OCI-LY7 (cell line): ENCODE measurements at regions of chr13 and their contacts with region 1.

Region 1: DNA sequence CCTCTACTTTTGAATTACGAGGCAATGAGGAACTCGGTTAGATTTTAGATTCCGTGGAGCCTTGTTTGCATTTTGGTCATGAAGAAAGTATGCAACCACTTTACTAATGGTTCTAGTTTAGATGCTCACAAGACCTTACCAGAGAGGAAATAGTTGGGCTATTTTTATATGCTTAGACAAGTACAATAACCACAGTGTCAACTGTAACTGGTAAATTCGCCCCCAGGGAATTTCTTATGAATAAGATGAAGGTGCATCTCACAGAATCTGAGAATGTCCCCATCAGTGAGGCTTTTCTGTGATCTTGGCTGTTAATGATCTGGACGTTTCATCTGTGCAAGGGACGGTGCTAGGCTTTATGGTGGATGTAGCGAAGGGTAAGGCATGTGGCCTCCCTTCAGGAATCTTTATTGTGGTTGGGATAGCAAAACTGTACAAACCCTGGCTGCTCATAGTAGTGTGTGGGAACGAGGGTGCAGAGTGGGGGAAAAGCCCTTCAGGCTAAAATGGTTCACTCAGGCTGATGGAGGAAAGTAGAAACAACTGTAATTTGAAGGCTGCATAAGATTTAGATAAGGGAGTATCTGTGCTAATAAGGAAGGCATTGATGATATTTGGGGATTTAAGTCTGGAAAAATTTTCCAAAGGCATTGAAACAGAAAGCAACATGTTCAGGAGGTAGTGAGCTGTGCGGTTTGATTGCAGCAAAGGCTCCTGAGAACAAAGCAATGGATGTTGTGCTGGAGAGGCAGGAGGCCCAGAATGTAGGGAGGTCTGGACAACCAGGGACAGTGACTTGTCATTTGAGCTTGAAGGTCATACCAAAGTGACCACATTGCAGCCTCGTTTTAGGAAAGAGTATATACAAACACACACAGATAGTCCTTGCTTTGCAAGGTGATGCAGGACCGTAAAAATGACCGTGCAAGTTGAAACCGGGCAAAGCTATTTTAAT is 28.4 kb downstream of the UBAC2 start:
- DNase-seq: peak; percentile 95
- H3K4me3 ChIP-seq: peak overlapping the region; percentile 58
- H3K27ac ChIP-seq: peak overlapping the region; percentile 97
- H3K4me1 ChIP-seq: peaks cover 85% of the 10 kb centered on the region
- CTCF ChIP-seq: no peak

Region 2: GRCh38 chr13:99200432-99201167 is 28.4 kb before region 1 on chr13 and contains the start of gene UBAC2:
- CTCF ChIA-PET with region 1: no interaction called
- POLR2A ChIA-PET with region 1: interaction called, 12 read pairs
- intact Hi-C with region 1: loop called (anchors 1 kb)
- DNase-seq: peak; percentile 92
- H3K4me3 ChIP-seq: peak within 1 kb of the TSS; percentile 87
- H3K27ac ChIP-seq: peak within 1 kb of the TSS; percentile 82
- H3K4me1 ChIP-seq: peaks cover 50% of the 10 kb centered on the region
- CTCF ChIP-seq: no peak
- total RNA-seq, gene UBAC2: 26.8 and 33.4 TPM in 2 replicates

Region 3: DNA sequence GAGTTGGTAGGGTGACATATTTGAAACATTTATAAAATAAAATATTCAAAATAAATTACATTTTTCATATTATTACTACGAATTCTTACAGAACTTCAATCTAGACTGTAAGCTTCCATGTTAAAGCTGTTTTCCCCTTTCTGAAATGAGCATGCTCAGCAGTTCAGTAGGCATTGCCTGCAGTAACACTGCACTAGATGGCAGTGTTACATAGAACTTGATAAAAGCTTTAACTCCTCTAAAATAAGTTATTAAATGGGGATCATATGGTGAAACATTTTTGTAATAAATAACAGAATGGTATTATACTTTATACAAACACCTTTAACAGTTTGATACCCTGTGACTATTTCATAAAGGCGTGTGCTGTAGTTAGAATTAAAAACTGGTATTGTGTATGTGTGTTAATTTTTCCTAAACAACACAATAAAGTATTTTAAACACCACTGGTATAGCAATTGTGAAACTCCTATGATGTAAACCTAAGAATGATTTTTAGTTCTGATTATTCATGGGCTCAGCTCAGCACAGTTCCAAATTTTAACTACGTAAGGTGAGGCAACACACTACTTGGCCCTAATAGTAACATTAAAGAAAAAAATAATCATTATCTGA is 40.7 kb after region 1 on chr13:
- CTCF ChIA-PET with region 1: no interaction called
- POLR2A ChIA-PET with region 1: no interaction called
- intact Hi-C with region 1: no loop called
- DNase-seq: peak; percentile 55
- H3K4me3 ChIP-seq: no peak overlapping the region
- H3K27ac ChIP-seq: no peak overlapping the region
- H3K4me1 ChIP-seq: peaks cover 23% of the 10 kb centered on the region
- CTCF ChIP-seq: peak; percentile 80